Right ventricle myocardium superior (tissue), 1 donor: ENCODE measurements at regions of chr10 and their contacts with region 1.

Region 1: DNA sequence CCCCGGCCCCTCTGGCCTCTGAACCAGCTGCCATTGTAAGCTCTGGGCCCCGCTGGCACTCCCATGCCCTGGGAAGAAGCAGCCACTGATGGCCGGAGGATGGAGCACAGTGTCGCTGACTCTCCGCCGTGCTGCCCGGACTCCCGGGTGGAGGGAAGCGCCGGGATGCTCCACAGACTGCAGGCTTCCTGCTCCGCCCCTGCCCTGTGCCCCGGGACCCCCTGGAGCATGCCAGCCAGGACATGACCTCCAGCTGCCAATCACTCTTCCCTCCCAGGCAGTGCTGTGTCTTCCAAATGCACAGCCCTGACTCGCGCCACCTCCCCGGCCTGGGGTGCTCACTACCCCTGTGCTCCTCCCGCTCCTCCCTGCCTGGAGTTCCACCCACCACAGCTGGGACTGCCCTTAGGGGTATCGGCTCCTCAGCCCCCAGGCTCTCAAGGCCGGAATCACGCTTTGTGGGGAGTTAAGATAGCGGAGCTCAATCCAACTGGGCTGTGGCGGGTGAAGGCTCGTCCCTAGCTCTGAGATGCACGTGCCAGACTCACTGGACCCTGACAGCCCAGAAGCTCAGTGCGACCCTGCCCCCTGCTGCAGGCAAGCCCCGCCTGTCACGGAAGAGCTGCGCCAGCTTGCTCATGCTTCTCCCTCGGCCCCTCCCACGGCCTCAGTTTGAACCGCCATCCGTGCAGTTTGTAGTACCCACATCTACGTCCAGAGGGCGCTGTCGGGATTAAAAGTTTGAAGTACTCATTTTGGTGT is 142.3 kb upstream of the TCERG1L start:
- DNase-seq: peak; percentile 79
- ATAC-seq: peak; percentile 77

Region 2: GRCh38 chr10:130615489-130615888 is 838.3 kb before region 1 on chr10:
- intact Hi-C with region 1: no loop called
- DNase-seq: no peak
- ATAC-seq: no peak

Region 3: GRCh38 chr10:131568506-131569265 is 114.9 kb after region 1 on chr10:
- intact Hi-C with region 1: no loop called
- DNase-seq: no peak
- ATAC-seq: no peak

Region 4: DNA sequence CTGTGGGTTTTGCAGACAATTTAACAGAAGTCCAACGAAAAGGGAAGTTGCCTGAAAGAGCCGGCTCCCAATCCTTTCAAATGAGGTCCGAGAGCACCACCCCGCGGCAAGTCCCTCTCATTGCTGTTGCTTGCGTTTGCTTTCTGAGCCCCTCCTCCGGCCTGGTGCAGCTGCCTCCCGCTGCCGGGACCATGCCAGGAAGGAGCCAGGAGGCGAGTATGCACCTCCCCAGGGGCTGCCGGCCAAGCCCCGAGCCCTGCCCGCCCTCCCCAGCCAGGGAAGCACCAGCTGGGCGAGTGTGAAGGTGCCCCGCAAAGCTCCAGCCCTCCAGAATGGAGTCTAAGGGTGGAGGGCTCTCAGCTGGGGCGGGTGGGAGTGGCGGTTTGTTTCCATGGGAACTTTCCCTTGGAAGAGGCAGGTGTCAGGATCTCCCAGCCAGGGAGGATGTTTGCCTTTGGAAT is 421.2 kb after region 1 on chr10:
- intact Hi-C with region 1: loop called (anchors 5 kb)
- DNase-seq: peak; percentile 80
- ATAC-seq: peak; percentile 86